ENCODE measurements at regions of chr17 and their contacts with region 1.

Region 1: GRCh38 chr17:75405365-75406221 is at the start of gene GRB2:
- DNase-seq: peak; percentile 100
- ATAC-seq: peak; percentile 90
- H3K4me3 Mint-ChIP-seq: peak within 1 kb of the TSS; percentile 96
- H3K27ac Mint-ChIP-seq: peak within 1 kb of the TSS; percentile 95
- H3K4me1 Mint-ChIP-seq: peaks cover 33% of the 10 kb centered on the region
- H3K27me3 Mint-ChIP-seq: peaks cover 2% of the 10 kb centered on the region
- total RNA-seq, gene GRB2: 149 to 155 TPM

Region 2: DNA sequence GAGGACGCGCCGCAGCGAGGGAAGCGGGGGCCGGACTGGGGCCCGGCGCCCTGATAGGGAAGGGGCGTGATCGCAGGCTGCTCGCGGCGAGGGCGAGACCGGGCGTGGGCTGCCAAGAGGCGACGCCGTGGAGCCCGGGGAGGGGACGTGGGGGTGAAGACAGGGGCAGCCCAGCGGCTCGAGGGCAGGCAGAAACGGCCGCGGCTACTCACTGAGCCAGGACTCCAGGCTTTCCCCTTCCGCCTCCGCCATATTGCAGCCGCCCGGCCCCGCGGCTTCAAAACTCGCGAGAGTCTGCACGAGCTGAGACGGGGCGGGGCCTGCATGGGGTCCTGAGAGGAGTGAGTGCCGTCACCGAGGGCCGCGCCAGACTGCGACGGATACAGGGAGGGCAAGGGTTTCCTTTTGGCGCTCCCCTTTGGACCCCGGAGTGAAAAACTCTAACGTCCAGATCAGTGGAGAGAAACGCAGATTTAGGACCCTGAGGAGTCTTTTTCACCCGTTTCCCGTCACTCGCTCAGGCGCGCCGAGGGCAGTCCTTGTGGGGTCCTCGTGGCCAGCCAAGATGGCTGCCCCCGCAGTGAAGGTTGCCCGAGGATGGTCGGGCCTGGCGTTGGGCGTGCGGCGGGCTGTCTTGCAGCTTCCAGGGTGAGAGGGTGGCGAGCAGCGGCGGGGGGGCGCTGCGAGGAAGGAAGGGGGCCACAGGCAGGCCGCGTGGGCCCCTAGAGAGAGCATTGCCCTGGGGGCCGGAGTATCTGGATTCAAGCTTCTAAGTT is 144.1 kb before region 1 on chr17 and contains the starts of genes GGA3 and MRPS7:
- POLR2A ChIA-PET with region 1: interaction called, 20 read pairs
- DNase-seq: peak; percentile 98
- ATAC-seq: peak; percentile 90
- H3K4me3 Mint-ChIP-seq: peak within 1 kb of the TSS; percentile 99
- H3K27ac Mint-ChIP-seq: peak within 1 kb of the TSS; percentile 99
- H3K4me1 Mint-ChIP-seq: peaks cover 30% of the 10 kb centered on the region
- H3K27me3 Mint-ChIP-seq: no peaks in the 10 kb centered on the region
- total RNA-seq, gene GGA3: 92.9 to 95.2 TPM
- total RNA-seq, gene MRPS7: 34.0 to 36.1 TPM

Region 3: DNA sequence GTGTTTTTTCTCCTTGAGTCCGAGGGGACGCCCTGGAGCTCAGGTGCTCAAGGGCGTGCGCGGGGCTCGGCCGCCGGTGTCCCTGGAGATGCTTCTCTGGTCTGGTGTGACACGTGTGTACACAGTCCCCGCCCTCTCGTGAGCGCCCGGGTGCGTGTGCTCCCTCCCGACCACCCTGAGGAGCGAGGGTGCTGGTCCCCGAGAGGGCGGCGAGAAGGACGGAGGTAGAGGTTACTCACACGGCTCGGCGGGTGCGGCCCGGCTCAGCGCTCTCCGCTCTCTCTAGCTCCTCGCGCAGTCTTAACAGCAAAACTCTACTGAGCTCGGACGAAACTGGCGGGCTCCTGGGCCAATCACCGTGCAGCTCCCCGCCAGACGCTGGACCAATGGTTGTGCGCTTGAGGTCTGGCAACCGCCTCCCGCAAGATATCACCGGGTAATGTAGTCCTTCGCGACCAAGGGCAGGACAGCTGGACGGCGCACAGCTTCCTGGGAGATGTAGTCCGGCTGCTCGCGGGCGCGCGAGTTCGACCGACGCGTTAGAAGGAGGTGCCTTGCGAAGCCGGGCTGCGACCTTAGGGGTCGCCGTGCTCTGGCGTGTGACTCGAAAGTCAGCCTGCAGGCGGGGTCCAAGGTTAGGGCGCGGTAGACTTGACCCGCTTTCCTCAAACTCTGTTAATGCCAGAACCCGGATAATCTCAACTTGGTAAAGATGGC is 116.3 kb before region 1 on chr17 and contains the start of gene SLC25A19:
- POLR2A ChIA-PET with region 1: interaction called, 41 read pairs
- DNase-seq: peak; percentile 95
- ATAC-seq: peak; percentile 95
- H3K4me3 Mint-ChIP-seq: peak within 1 kb of the TSS; percentile 97
- H3K27ac Mint-ChIP-seq: peak within 1 kb of the TSS; percentile 100
- H3K4me1 Mint-ChIP-seq: peaks cover 15% of the 10 kb centered on the region
- H3K27me3 Mint-ChIP-seq: no peaks in the 10 kb centered on the region
- total RNA-seq, gene SLC25A19: 26.7 to 27.9 TPM

Region 4: DNA sequence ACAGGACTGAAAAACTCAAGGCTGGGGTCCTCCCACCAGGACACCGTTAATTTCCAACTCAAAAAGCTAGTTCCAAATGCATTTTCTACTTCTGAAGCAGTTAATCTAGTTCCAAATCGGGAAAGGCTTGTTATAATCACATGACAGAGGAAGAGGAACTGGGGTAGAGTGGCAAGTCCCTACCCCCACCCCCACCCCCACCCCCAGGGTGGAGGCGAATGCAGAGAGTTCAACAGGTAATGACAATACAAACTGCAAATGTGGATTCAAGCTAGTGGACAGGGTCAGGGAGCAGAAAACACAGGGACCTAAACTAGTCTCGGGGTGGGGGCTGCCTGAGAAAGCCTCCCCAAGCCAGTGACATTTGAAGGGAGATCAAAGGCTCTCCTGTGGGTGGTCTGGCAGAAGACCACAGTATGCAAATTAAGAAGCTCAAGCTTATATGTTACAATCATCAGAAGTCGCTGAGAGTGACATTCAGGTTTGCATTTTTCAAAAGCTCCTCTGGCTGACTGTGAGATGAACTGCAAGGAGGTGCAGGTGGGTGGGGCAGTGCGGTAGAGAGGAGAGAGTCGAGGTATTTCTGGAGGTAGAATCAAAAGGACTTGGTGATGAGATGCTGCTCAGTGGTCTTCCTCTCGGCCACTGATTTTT is 60.0 kb before region 1 on chr17:
- POLR2A ChIA-PET with region 1: interaction called, 13 read pairs
- DNase-seq: peak; percentile 53
- ATAC-seq: peak; percentile 84
- H3K4me3 Mint-ChIP-seq: peak overlapping the region; percentile 84
- H3K27ac Mint-ChIP-seq: peak overlapping the region; percentile 92
- H3K4me1 Mint-ChIP-seq: peaks cover 71% of the 10 kb centered on the region
- H3K27me3 Mint-ChIP-seq: no peaks in the 10 kb centered on the region

Region 5: GRCh38 chr17:75430159-75430974 is 24.8 kb after region 1 on chr17:
- POLR2A ChIA-PET with region 1: no interaction called
- DNase-seq: no peak
- ATAC-seq: no peak
- H3K4me3 Mint-ChIP-seq: no peak overlapping the region
- H3K27ac Mint-ChIP-seq: no peak overlapping the region
- H3K4me1 Mint-ChIP-seq: peaks cover 15% of the 10 kb centered on the region
- H3K27me3 Mint-ChIP-seq: peaks cover 22% of the 10 kb centered on the region

Region 6: DNA sequence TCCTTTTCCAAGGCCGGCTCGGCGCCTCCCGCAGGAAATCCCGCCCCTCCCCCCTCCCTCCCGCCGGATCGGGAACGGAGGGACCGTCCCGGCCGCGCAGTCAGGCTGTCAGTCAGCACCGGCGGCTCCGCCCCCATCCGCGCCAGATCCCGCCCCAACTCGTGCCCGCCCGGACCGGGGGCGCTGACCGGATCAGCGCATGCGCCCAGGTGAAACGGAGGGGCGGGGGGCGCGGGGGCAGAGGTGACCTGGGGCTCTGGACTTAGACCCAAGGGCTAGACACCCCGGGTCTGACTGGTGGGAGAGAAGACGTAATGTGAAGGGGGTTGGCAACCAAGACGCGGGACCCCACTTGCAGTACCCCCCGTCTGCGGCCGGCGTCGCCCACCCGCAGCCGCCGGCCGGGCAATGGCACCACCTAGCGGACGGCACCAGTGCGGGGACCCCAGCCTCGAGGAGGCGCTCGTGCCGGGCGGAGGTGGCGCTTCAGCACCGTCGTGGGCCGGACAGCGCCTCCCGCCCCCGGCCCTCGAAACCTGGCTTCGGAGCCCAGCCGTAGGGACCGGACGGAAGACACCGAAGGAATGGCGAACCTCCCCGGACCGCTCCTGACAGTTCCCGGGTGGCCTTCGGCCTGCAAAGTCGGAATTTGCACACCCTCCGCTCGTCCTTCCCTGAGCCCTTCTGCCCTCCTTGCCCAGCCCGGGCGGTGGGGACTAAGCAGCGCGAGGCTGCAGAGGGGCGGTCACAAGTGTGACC is 110.1 kb after region 1 on chr17 and contains the start of gene CASKIN2:
- POLR2A ChIA-PET with region 1: interaction called, 10 read pairs
- DNase-seq: peak; percentile 85
- ATAC-seq: peak; percentile 47
- H3K4me3 Mint-ChIP-seq: peak within 1 kb of the TSS; percentile 70
- H3K27ac Mint-ChIP-seq: peak within 1 kb of the TSS; percentile 16
- H3K4me1 Mint-ChIP-seq: peaks cover 24% of the 10 kb centered on the region
- H3K27me3 Mint-ChIP-seq: peaks cover 7% of the 10 kb centered on the region
- total RNA-seq, gene CASKIN2: 0.72 to 2.3 TPM